Activated CD8-positive, alpha-beta memory T cell treated with anti-CD3 and anti-CD28 coated beads, Interleukin-2, amount 10 ng/mL, durations not matched to agents 7 days and 5 days (primary cell): ENCODE measurements at regions of chr12 and their contacts with region 1.

Region 1: GRCh38 chr12:70576346-70577282 is 60.6 kb downstream of the PTPRB start:
- DNase-seq: no peak
- ATAC-seq: no peak
- H3K4me3 Mint-ChIP-seq: no peak overlapping the region
- H3K27ac Mint-ChIP-seq: no peak overlapping the region
- H3K4me1 Mint-ChIP-seq: no peaks in the 10 kb centered on the region
- H3K27me3 Mint-ChIP-seq: peaks cover 13% of the 10 kb centered on the region

Region 2: GRCh38 chr12:69879041-69879960 is 697.3 kb before region 1 on chr12:
- CTCF ChIA-PET with region 1: interaction called, 12 read pairs
- DNase-seq: peak; percentile 74
- ATAC-seq: peak; percentile 95
- H3K4me3 Mint-ChIP-seq: no peak overlapping the region
- H3K27ac Mint-ChIP-seq: no peak overlapping the region
- H3K4me1 Mint-ChIP-seq: peaks cover 6% of the 10 kb centered on the region
- H3K27me3 Mint-ChIP-seq: peaks cover 23% of the 10 kb centered on the region

Region 3: DNA sequence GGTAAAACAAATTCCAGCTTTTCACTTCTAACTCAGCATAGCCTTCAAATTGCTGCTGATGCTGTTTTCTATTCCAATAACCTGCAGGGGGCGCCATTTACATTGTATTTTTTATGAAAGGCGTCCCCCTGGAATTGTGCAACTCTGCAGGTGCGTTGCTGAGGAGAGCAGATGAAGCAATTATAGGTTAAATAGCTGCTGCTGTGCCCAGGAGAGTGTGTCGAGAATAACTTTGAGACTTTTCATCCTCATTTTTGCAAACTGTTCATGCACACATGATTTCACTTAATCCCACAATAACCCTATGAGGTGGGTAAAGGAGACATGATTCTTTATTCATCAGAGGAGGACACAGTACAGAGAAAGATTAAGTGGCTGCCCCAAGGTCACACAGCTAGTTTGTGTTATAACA is 675.9 kb before region 1 on chr12:
- CTCF ChIA-PET with region 1: interaction called, 18 read pairs
- DNase-seq: peak; percentile 74
- ATAC-seq: no peak
- H3K4me3 Mint-ChIP-seq: no peak overlapping the region
- H3K27ac Mint-ChIP-seq: no peak overlapping the region
- H3K4me1 Mint-ChIP-seq: peaks cover 4% of the 10 kb centered on the region
- H3K27me3 Mint-ChIP-seq: peaks cover 9% of the 10 kb centered on the region